Activated CD4-positive, alpha-beta T cell treated with anti-CD3 and anti-CD28 coated beads, Interleukin-2, amount 10 ng/mL, durations not matched to agents 24 days and 14 days (primary cell): ENCODE measurements at regions of chr13 and their contacts with region 1.

Region 1: DNA sequence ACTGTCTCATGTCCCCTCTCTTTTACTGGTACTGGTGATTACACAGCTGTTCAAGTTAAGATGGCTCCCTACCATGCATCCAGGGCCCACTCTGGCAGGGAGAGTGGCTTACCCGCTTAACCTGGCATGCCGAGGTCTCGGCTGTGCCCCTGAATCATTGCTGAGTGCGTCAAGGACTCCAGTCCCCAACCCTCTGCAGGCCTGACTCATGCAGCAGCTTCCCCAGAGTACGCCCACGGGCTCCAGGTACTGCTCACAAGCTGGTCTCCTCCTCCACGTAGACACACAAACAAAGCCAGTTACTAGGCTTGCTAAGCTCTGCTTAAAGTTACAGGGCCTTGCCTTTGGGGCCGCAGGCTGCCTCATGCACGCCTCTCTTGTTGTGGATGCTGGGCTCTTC is 447.4 kb downstream of the COG6 start:
- DNase-seq: peak; percentile 84
- H3K4me3 Mint-ChIP-seq: peak overlapping the region; percentile 75
- H3K27ac Mint-ChIP-seq: peak overlapping the region; percentile 93
- H3K4me1 Mint-ChIP-seq: peaks cover 50% of the 10 kb centered on the region
- H3K27me3 Mint-ChIP-seq: no peaks in the 10 kb centered on the region

Region 2: GRCh38 chr13:39952249-39953233 is 150.3 kb before region 1 on chr13:
- intact Hi-C with region 1: loop called (anchors 5 kb)
- DNase-seq: no peak
- H3K4me3 Mint-ChIP-seq: no peak overlapping the region
- H3K27ac Mint-ChIP-seq: peak overlapping the region; percentile 54
- H3K4me1 Mint-ChIP-seq: peaks cover 30% of the 10 kb centered on the region
- H3K27me3 Mint-ChIP-seq: peaks cover 5% of the 10 kb centered on the region

Region 3: DNA sequence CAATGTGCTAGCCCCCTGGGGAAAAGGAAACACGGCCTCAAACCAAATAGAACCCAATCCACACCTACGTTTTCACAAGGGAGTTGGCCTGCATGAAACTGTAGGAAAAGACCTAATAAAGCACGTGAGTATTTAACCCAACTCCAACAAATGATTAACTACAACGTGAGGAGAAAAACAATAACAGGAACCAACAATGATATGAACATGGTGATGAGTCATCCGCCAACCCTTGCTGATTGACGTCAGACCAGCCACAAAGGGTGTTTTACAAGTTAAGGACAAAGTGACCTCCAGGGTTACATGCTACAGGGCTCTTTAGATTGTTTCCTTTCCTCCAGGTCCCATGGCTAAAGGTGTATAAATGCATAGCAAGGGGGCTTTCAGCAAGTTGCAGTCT is 13.2 kb after region 1 on chr13:
- intact Hi-C with region 1: loop called (anchors 1 kb)
- DNase-seq: peak; percentile 86
- H3K4me3 Mint-ChIP-seq: peak overlapping the region; percentile 48
- H3K27ac Mint-ChIP-seq: peak overlapping the region; percentile 89
- H3K4me1 Mint-ChIP-seq: peaks cover 22% of the 10 kb centered on the region
- H3K27me3 Mint-ChIP-seq: no peaks in the 10 kb centered on the region

Region 4: DNA sequence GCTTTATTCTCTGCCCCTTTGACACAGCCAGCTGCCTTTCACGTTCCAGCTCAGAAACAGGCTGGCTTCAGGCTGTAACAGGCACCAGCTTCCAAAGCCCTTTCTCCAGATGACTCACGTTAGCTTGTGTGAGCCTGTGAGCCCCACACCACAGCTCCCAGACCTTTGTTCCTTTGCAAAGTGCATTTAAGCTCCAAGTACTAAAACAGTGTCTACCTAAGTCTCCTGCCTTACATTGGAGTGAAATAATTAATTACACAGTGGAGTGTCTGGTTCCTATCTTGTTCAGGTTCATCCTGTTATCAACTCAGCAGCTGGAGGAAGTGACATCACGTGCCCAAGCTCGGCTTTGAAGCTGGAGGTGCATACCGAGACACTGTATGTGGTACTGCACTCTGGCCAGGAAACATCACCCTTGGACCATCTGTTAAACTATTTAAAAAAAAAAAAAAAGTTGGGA is 87.8 kb after region 1 on chr13:
- intact Hi-C with region 1: loop called (anchors 1 kb)
- DNase-seq: peak; percentile 90
- H3K4me3 Mint-ChIP-seq: peak overlapping the region; percentile 83
- H3K27ac Mint-ChIP-seq: peak overlapping the region; percentile 92
- H3K4me1 Mint-ChIP-seq: peaks cover 64% of the 10 kb centered on the region
- H3K27me3 Mint-ChIP-seq: no peaks in the 10 kb centered on the region

Region 5: DNA sequence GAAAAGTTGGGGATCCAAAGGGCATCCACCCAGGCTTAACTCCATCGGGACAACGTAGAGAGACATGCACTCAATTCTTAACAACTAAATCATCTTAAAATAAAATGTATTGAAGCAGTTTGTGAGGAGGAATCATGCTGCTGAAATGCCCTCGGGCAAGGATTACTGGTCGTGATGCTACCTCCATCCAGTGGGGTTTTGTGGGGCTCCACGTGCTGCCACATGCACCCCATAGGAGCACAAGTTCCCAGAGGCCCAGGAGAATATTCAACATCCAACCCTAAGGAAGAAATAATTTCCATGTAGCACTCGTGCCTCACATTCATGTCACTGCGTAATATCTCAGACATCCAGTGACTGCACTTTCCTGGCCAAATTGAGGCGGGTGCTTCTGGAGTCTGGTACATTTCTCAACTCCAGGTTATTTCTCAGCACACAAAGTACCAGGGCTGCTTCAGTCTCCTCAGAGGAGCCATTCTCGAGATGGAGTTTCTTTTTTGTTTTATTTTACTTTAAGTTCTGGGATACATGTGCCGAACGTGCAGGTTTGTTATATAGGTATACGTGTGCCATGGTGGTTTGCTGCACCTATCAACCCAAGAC is 133.8 kb after region 1 on chr13:
- intact Hi-C with region 1: no loop called
- DNase-seq: no peak
- H3K4me3 Mint-ChIP-seq: no peak overlapping the region
- H3K27ac Mint-ChIP-seq: no peak overlapping the region
- H3K4me1 Mint-ChIP-seq: peaks cover 2% of the 10 kb centered on the region
- H3K27me3 Mint-ChIP-seq: no peaks in the 10 kb centered on the region

Region 6: DNA sequence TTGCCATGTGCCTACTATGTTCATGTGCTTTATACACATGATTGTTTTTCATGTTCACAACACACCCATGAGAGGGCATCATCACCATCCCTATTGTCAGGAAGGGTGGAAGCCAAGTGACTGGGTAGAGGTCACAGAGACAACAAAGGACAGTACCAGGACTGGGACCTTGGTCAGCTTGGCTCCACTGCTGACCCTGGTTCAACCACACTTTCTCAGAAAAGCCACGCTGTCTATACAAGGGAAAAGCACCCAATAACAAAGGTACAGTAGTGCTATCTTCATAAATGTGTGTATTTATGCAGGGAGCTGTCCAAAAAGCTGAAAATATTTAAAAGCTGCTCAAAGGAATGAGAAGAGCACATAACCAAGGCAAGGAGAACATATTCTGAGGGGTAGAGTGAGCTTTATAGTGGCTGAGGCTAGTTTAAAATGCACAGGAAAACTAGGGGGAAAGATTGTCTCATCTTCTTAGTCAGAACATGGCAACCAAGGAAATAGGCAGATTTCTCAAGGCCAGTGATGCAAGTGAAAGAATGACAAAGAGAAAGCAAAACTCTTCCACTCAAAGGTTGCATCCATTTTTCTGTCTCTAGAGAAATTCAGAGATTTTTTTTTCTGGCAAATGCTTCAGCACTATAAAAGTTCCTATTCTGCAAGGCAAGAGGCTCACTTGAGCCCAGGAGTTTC is 148.6 kb after region 1 on chr13:
- intact Hi-C with region 1: loop called (anchors 1 kb)
- DNase-seq: peak; percentile 68
- H3K4me3 Mint-ChIP-seq: peak overlapping the region; percentile 48
- H3K27ac Mint-ChIP-seq: peak overlapping the region; percentile 83
- H3K4me1 Mint-ChIP-seq: peaks cover 24% of the 10 kb centered on the region
- H3K27me3 Mint-ChIP-seq: no peaks in the 10 kb centered on the region

Region 7: DNA sequence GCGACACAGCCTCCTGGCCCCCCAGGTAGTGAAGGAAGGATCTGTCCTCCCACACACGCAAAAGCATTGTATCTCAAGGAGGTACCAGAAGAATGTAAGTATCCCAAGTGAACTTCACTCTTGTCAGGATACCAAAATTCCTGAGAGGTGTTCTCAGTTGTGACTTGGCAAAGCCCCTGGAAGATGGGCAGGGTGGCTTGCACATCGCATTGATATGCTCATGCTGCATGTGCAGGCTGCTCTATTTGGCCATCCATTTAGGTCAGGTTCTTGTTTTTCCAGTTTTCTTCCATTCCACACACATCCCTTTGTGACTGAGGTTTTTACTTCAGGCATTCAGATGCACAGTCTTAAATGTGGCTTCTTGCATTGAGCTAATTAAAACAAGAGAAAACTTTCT is 180.8 kb after region 1 on chr13:
- intact Hi-C with region 1: no loop called
- DNase-seq: no peak
- H3K4me3 Mint-ChIP-seq: no peak overlapping the region
- H3K27ac Mint-ChIP-seq: no peak overlapping the region
- H3K4me1 Mint-ChIP-seq: no peaks in the 10 kb centered on the region
- H3K27me3 Mint-ChIP-seq: peaks cover 2% of the 10 kb centered on the region

Region 8: DNA sequence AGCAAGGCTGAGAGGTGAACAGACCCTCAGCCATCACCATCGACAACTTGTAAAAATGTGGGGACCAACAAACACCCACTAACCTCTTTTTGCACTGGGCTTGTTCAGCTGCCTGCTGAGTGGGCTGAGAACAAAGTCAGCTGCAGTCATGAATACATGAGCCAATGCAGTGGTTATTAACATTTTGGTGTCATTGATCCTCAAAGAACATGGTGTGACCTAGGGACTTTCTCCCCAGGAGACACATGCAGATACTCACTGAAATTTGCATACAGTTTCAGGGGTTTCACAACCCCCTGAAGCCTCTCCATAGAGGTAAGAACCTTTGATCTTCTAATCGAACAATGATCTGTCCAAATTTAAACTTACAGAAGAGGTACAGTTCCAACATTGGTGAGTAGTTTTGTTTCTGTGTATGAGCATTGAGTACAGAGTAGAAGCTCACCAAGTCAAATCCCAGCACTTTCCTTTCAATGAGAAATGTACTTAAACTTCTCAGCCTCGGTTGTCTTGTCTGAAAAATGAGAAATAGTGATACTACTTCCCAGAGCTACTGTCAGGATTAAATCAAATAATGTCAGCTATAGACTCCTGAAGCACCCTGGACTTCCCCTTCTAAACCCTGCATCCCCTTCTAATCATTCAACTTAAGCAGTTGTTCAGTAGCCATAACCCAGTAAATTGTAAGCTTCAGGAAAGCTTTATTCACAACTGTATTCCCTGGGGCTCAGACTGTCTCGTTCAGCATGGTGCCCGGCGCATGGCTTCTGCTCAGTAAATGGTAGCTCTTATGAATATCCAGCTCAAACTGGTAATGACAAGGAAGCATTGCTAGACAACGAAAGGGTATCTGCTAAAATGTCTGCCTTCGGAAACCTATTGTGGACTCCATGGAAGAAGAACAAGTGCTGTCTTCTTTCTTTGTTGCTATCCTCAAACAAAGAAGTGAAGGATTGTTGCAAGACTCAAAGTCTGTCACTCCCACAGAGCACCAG is 414.9 kb after region 1 on chr13:
- intact Hi-C with region 1: loop called (anchors 2 kb)
- DNase-seq: no peak
- H3K4me3 Mint-ChIP-seq: peak overlapping the region; percentile 72
- H3K27ac Mint-ChIP-seq: peak overlapping the region; percentile 92
- H3K4me1 Mint-ChIP-seq: peaks cover 63% of the 10 kb centered on the region
- H3K27me3 Mint-ChIP-seq: no peaks in the 10 kb centered on the region